Breast epithelium (tissue), 4 donors: ENCODE measurements at regions of chr3 and their contacts with region 1.

Region 1: DNA sequence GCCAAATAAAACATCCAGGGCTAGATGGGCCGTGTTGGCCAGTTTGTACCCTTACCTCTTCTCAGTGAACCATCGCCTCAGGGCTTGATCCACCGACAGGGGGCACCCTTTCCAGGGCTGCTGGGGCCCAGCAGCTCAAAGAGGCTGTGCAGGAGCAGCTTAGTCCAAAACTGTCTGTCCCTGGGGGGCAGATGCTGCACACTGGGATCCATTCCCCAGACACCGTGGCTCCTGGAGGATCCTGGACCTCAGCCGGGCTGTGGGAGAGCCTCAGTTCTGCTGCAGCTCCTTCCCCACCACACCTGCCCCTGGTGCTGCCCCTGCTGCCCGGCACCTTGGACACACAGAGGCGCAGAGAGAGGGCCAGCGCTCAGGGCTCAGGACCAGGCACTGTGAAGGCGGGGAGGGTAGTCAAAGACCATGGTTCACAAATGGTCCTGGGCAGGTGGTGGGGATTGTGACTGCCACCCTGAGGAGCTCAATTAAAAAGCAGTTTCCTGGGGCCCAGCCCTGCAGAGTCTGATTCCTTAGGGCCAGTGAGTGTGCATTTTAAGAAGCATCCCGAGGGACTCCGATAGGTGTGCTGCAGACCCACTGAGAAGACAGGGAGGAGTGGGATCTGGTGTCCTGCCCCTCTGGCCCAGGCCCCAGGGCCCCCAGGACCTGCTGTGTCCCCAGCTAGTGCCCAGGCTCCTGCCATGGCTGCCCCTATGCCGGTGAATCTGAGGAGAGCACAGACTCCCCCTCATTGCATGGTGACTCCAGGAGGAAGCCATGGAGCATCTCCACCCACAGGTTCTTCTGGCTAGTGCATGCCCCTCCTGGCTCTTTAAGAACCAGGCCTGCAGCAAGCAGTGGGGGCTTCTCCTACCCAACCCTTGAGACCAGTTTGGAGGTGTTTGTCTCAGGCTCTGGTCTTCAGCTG is 86.5 kb upstream of the PRR20G start:
- DNase-seq: no peak
- H3K4me3 ChIP-seq: no peak overlapping the region
- H3K27ac ChIP-seq: no peak overlapping the region
- H3K4me1 ChIP-seq: no peaks in the 10 kb centered on the region
- H3K27me3 ChIP-seq: peaks cover 0 to 8% of the 10 kb centered on the region in 2 donors
- CTCF ChIP-seq: no peak
- POLR2A ChIP-seq: no peak

Region 2: GRCh38 chr3:127089486-127090145 is 284.7 kb before region 1 on chr3:
- intact Hi-C with region 1: loop called (anchors 10 kb)
- DNase-seq: no peak
- H3K4me3 ChIP-seq: no peak overlapping the region
- H3K27ac ChIP-seq: no peak overlapping the region
- H3K4me1 ChIP-seq: no peaks in the 10 kb centered on the region
- H3K27me3 ChIP-seq: peaks cover 0 to 7% of the 10 kb centered on the region in 2 donors
- CTCF ChIP-seq: no peak
- POLR2A ChIP-seq: no peak

Region 3: GRCh38 chr3:127395663-127396355 is 21.5 kb after region 1 on chr3:
- intact Hi-C with region 1: no loop called
- DNase-seq: no peak
- H3K4me3 ChIP-seq: no peak overlapping the region
- H3K27ac ChIP-seq: no peak overlapping the region
- H3K4me1 ChIP-seq: no peaks in the 10 kb centered on the region
- H3K27me3 ChIP-seq: no peaks in the 10 kb centered on the region
- CTCF ChIP-seq: no peak
- POLR2A ChIP-seq: no peak